Naive thymus-derived CD4-positive, alpha-beta T cell (primary cell): ENCODE measurements at regions of chr3 and their contacts with region 1.

Region 1: DNA sequence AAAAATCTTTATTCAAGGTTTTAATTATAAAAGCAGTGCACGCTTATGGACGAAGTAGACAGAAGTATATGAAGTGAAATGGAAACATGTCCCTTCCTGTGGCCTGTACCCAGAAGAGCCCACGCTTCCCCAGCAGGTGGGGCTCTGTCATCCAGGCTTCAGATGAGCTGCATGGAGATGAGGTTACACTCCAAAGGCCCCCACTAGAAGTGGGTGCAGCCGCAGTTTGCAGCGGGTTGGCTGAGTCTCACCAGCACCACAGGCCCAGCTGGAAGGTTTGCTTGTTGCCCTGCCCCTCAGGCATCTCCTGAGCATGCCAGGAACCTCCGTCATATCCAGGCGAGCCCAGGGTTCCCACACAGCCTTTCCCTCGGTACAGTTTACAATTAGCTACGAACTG is 33.1 kb downstream of the PRR20G start:
- DNase-seq: no peak
- ATAC-seq: no peak
- H3K4me3 ChIP-seq: no peak overlapping the region
- H3K4me3 Mint-ChIP-seq: no peak overlapping the region
- H3K27ac ChIP-seq: no peak overlapping the region
- H3K27ac Mint-ChIP-seq: no peak overlapping the region
- H3K4me1 ChIP-seq: no peaks in the 10 kb centered on the region
- H3K4me1 Mint-ChIP-seq: peaks cover 0 to 1% (median 0%) of the 10 kb centered on the region in 7 donors
- H3K27me3 ChIP-seq: no peaks in the 10 kb centered on the region
- H3K27me3 Mint-ChIP-seq: peaks cover 0 to 13% (median 4%) of the 10 kb centered on the region in 5 donors

Region 2: GRCh38 chr3:126475413-126476114 is 779.2 kb before region 1 on chr3 and contains the start of gene ZXDC:
- CTCF ChIA-PET with region 1: no interaction called
- POLR2A ChIA-PET with region 1: no interaction called
- intact Hi-C with region 1: no loop called
- DNase-seq: peak; percentile 85 to 95 (median 90)
- ATAC-seq: peak; percentile 89
- H3K4me3 ChIP-seq: peak within 1 kb of the TSS; percentile 89
- H3K4me3 Mint-ChIP-seq: peak within 1 kb of the TSS; percentile 81 to 97 (median 92)
- H3K27ac ChIP-seq: peak within 1 kb of the TSS; percentile 87
- H3K27ac Mint-ChIP-seq: peak within 1 kb of the TSS; percentile 82 to 96 (median 92)
- H3K4me1 ChIP-seq: peaks cover 29 to 34% of the 10 kb centered on the region in 2 donors
- H3K4me1 Mint-ChIP-seq: peaks cover 34 to 52% (median 48%) of the 10 kb centered on the region in 7 donors
- H3K27me3 ChIP-seq: no peaks in the 10 kb centered on the region
- H3K27me3 Mint-ChIP-seq: peaks cover 0 to 4% (median 0%) of the 10 kb centered on the region in 5 donors
- total RNA-seq, gene ZXDC: 33.7 to 71.9 (median 67.6) TPM

Region 3: GRCh38 chr3:127288921-127289705 is 34.4 kb after region 1 on chr3:
- CTCF ChIA-PET with region 1: no interaction called
- POLR2A ChIA-PET with region 1: no interaction called
- intact Hi-C with region 1: loop called in 1 of 2 experiments (anchors 1 kb)
- DNase-seq: peak in 4 of 9 donors; percentile 17 to 31 (median 21)
- ATAC-seq: peak; percentile 40
- H3K4me3 ChIP-seq: no peak overlapping the region
- H3K4me3 Mint-ChIP-seq: no peak overlapping the region
- H3K27ac ChIP-seq: no peak overlapping the region
- H3K27ac Mint-ChIP-seq: no peak overlapping the region
- H3K4me1 ChIP-seq: no peaks in the 10 kb centered on the region
- H3K4me1 Mint-ChIP-seq: peaks cover 0 to 3% (median 0%) of the 10 kb centered on the region in 7 donors
- H3K27me3 ChIP-seq: no peaks in the 10 kb centered on the region
- H3K27me3 Mint-ChIP-seq: peaks cover 0 to 18% (median 4%) of the 10 kb centered on the region in 5 donors